ENCODE measurements at regions of chr10 and their contacts with region 1.

Region 1: DNA sequence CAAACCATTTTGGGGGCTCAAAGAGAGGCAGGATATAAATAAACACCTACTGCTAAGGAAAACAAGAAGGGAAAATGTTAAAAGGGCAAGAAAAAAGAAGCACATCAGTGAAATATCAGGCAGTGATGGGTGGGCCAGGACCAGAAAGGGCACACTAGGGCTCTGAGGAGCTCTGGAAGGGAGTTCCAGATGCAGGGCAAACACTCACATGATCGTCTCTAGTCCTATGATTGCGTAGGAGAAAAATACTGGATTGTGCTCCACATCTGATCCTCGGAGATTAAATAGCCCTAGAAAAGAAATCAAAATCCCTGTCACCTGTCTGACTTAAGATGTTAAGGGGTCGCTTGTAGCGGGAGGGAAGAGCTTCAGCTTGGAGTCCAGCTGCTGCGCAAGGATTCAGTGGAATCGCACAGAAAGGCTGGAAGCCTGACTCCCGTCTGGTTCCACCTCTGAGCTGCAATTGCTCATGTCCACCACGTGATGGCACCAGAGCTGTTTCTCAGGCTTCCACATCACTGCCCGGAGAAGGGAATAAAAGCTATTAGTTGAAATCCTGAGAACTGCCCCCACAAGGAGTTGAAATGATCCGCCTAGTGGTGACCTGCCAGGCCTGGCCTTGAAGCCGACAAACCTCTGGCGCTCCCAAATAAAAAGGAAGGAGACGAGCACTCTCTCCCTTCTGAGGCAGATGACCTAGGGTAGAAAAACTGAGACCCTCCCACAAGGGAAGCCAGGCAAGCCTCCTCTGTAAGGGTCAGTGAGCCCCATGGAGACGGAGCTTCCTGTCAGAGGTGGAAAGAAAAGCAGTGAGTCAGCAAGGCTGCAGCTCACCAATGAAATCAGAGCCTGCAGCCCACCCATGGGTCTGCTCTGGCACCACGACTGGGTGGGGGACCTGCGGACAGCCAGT is 39.2 kb downstream of the XPNPEP1 start:
- DNase-seq: peak; percentile 81 to 84
- H3K4me3 ChIP-seq: peak overlapping the region in 1 of 4 experiments; percentile 26; a peak in 2 of 8 replicates
- H3K27ac ChIP-seq: peak overlapping the region; percentile 44; the same call in 1 of the 2 replicates
- H3K4me1 ChIP-seq: peaks cover 0 to 5% (median 1%) of the 10 kb centered on the region in 4 experiments; a peak in 2 of 7 replicates
- H3K27me3 ChIP-seq: no peaks in the 10 kb centered on the region
- CTCF ChIP-seq: peak; percentile 77 to 99 (median 98)
- EP300 ChIP-seq: no peak
- POLR2A ChIP-seq: no peak
- RAD21 ChIP-seq: peak; percentile 96 to 98

Region 2: DNA sequence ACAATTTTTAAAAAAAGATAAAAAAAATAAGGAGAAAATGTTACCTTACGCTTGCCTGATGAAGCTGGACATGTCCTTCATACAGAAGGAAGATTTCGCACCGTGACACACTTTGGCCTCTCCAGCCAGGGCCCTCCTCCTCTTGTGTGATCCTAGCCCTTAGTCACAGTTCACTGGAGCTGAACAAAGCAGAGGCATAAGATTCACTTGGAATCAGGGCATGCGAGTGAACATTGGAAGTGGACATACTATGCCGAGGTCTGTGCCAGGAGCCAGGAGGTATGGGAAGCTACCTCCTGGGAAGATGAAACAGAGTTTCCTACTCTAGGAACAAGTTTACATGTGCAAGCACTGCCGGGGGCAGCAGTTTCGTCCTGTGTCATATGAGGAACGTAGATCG is 52.3 kb before region 1 on chr10:
- CTCF ChIA-PET with region 1: no interaction called
- POLR2A ChIA-PET with region 1: no interaction called
- DNase-seq: no peak
- H3K4me3 ChIP-seq: no peak overlapping the region
- H3K27ac ChIP-seq: no peak overlapping the region
- H3K4me1 ChIP-seq: no peaks in the 10 kb centered on the region
- H3K27me3 ChIP-seq: no peaks in the 10 kb centered on the region
- CTCF ChIP-seq: no peak
- EP300 ChIP-seq: no peak
- POLR2A ChIP-seq: no peak
- RAD21 ChIP-seq: no peak

Region 3: GRCh38 chr10:109894516-109894915 is 10.4 kb after region 1 on chr10:
- CTCF ChIA-PET with region 1: interaction called, 21 read pairs
- POLR2A ChIA-PET with region 1: interaction called, 3 read pairs
- DNase-seq: no peak
- H3K4me3 ChIP-seq: no peak overlapping the region
- H3K27ac ChIP-seq: no peak overlapping the region
- H3K4me1 ChIP-seq: peaks cover 0 to 8% (median 2%) of the 10 kb centered on the region in 4 experiments; a peak in 6 of 7 replicates
- H3K27me3 ChIP-seq: no peaks in the 10 kb centered on the region
- CTCF ChIP-seq: no peak
- EP300 ChIP-seq: no peak
- POLR2A ChIP-seq: no peak
- RAD21 ChIP-seq: no peak

Region 4: GRCh38 chr10:109914966-109915365 is 30.9 kb after region 1 on chr10:
- CTCF ChIA-PET with region 1: interaction called, 16 read pairs
- POLR2A ChIA-PET with region 1: interaction called, 4 read pairs
- DNase-seq: no peak
- H3K4me3 ChIP-seq: no peak overlapping the region
- H3K27ac ChIP-seq: no peak overlapping the region
- H3K4me1 ChIP-seq: peaks cover 0 to 3% (median 1%) of the 10 kb centered on the region in 4 experiments; a peak in 2 of 7 replicates
- H3K27me3 ChIP-seq: no peaks in the 10 kb centered on the region
- CTCF ChIP-seq: no peak
- EP300 ChIP-seq: no peak
- POLR2A ChIP-seq: no peak
- RAD21 ChIP-seq: no peak

Region 5: GRCh38 chr10:109956454-109957091 is 72.5 kb after region 1 on chr10:
- CTCF ChIA-PET with region 1: interaction called, 37 read pairs
- POLR2A ChIA-PET with region 1: no interaction called
- DNase-seq: no peak
- H3K4me3 ChIP-seq: no peak overlapping the region
- H3K27ac ChIP-seq: no peak overlapping the region
- H3K4me1 ChIP-seq: peaks cover 0 to 4% (median 2%) of the 10 kb centered on the region in 4 experiments; a peak in 6 of 7 replicates
- H3K27me3 ChIP-seq: no peaks in the 10 kb centered on the region
- CTCF ChIP-seq: peak; percentile 69 to 88 (median 74)
- EP300 ChIP-seq: no peak
- POLR2A ChIP-seq: no peak
- RAD21 ChIP-seq: peak; percentile 54 to 73

Region 6: GRCh38 chr10:109987452-109988211 is 103.5 kb after region 1 on chr10:
- CTCF ChIA-PET with region 1: interaction called, 14 read pairs
- POLR2A ChIA-PET with region 1: no interaction called
- DNase-seq: no peak
- H3K4me3 ChIP-seq: no peak overlapping the region
- H3K27ac ChIP-seq: no peak overlapping the region
- H3K4me1 ChIP-seq: no peaks in the 10 kb centered on the region
- H3K27me3 ChIP-seq: no peaks in the 10 kb centered on the region
- CTCF ChIP-seq: no peak
- EP300 ChIP-seq: no peak
- POLR2A ChIP-seq: no peak
- RAD21 ChIP-seq: no peak

Region 7: GRCh38 chr10:110118891-110119621 is 234.9 kb after region 1 on chr10:
- CTCF ChIA-PET with region 1: interaction called, 13 read pairs
- POLR2A ChIA-PET with region 1: no interaction called
- DNase-seq: no peak
- H3K4me3 ChIP-seq: no peak overlapping the region
- H3K27ac ChIP-seq: no peak overlapping the region
- H3K4me1 ChIP-seq: no peaks in the 10 kb centered on the region
- H3K27me3 ChIP-seq: no peaks in the 10 kb centered on the region
- CTCF ChIP-seq: no peak
- EP300 ChIP-seq: no peak
- POLR2A ChIP-seq: no peak
- RAD21 ChIP-seq: no peak